Motor neuron (in vitro differentiated cells): ENCODE measurements at regions of chr10 and their contacts with region 1.

Region 1: DNA sequence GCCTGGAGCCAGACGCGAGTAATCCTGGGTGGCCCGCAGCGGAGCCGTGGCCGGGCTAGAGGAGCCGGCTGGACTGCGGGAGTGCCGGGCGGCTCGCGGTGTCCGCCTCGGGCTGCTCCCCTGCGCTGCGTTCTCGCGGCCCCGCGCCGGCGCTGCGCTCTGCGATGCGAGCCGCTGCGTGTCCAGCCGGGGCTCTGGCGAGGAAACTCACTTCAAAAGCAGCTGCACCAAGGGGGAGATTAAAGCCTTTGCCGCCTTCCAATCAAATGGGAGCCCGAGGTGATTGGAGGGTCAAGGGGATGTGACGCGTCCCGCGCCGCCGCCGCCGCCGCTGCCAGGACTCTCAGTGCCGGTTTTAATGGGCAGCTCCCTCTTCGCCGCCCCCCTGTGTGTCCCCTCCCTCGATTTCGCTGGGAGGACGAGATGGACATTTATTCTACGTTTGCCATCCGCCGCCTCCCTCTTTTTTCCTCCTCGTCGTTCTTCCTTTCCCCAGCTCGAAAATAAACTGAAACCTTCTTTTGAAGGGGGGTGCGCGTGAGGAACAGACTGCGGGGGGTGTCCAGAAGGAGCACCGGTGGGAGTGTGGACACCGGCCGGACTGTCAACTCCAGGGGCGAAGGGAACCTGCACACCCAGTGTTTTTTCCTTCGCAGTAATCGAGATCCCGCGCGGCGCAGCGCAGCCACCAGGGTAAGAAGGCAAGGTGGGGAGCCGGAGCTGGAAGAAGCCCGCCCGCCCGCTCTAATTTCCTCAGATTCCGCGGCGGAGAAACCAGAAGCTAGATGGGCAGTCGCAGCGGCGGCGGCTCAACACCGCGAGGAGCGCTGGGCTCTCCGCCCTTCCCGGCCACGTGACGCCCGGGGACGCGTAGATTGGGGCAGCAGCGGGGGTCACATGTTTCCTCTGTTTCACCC is at the start of gene ZNF503:
- ATAC-seq: peak; percentile 52 to 74 (median 58)
- H3K4me3 ChIP-seq: peak within 1 kb of the TSS; percentile 47 to 94 (median 56)
- H3K27ac ChIP-seq: peak within 1 kb of the TSS; percentile 92
- H3K4me1 ChIP-seq: peaks cover 0 to 9% of the 10 kb centered on the region in 2 donors
- total RNA-seq, gene ZNF503: 1.3 to 30.3 (median 19.0) TPM

Region 2: DNA sequence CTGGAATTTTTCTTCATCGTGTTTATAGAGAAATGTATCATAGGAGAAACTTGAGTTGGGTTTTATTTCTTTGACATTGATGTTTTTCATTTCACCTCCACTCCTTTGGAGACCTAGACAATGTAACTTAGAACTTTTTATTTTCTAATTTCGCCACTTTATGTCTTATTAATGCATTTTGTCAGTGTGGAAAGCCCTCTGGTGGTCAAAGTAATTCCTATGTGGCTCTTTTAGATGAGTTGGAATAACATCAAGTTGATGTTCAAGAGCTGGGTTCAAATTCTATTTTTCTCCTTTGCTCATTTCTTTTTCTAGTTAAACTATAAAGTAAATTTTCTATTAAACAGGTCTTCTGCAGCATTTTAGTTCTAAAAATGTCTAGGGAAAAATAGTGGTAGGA is 508.2 kb after region 1 on chr10:
- in situ Hi-C with region 1: loop called in 3 of 9 experiments (anchors 25 kb)
- ATAC-seq: no peak
- H3K4me3 ChIP-seq: no peak overlapping the region
- H3K27ac ChIP-seq: no peak overlapping the region
- H3K4me1 ChIP-seq: peaks cover 17 to 28% of the 10 kb centered on the region in 2 donors

Region 3: DNA sequence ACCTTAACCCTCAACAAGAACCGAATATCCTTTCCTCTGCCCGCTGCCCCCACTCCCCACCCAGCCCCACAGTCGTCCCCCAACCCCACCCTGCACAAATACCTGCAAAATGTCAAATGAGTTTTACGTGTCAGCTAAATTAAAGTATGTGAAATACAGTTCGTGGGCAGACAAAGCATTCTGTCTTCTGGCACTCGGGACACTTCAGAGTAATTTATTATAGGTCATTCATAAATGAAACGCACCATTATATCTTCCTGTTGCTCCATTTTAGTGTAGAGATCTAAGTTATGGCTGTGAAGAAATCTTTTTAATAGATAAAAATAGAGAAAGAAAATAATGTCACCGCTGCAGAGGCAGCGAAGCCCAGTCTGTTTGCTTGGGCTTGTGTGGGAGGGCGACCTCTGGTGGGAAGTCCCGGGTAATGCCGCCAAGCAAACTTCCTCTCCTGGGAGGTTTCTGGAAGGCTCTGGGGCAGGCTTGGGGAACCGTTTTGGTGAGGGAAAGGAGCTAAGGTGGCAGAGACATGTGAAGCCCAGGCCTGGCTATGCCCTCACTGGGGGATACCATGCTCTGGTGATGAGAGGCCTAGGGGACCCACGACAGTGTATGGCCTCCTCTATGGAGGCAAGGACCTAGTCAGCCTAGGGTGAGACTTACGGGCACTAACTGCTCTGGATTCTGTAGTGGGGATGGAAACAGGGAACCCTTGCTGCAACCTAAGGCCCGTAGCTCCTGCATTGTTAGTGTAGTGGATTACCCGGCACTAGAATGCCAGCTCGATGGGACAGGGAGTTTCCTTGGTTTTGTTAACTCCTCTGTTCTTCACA is 634.5 kb after region 1 on chr10:
- in situ Hi-C with region 1: loop called in 2 of 9 experiments (anchors 25 kb)
- ATAC-seq: peak; percentile 46 to 93 (median 62)
- H3K4me3 ChIP-seq: peak overlapping the region in 3 of 5 donors; percentile 0 to 9 (median 9)
- H3K27ac ChIP-seq: peak overlapping the region; percentile 56 to 65
- H3K4me1 ChIP-seq: peaks cover 43% of the 10 kb centered on the region in 2 donors

Region 4: GRCh38 chr10:76303682-76304316 is 902.0 kb after region 1 on chr10:
- in situ Hi-C with region 1: loop called in 3 of 9 experiments (anchors 10 to 25 kb)
- ATAC-seq: peak; percentile 93 to 99 (median 98)
- H3K4me3 ChIP-seq: no peak overlapping the region
- H3K27ac ChIP-seq: no peak overlapping the region
- H3K4me1 ChIP-seq: peaks cover 23 to 33% of the 10 kb centered on the region in 2 donors

Region 5: DNA sequence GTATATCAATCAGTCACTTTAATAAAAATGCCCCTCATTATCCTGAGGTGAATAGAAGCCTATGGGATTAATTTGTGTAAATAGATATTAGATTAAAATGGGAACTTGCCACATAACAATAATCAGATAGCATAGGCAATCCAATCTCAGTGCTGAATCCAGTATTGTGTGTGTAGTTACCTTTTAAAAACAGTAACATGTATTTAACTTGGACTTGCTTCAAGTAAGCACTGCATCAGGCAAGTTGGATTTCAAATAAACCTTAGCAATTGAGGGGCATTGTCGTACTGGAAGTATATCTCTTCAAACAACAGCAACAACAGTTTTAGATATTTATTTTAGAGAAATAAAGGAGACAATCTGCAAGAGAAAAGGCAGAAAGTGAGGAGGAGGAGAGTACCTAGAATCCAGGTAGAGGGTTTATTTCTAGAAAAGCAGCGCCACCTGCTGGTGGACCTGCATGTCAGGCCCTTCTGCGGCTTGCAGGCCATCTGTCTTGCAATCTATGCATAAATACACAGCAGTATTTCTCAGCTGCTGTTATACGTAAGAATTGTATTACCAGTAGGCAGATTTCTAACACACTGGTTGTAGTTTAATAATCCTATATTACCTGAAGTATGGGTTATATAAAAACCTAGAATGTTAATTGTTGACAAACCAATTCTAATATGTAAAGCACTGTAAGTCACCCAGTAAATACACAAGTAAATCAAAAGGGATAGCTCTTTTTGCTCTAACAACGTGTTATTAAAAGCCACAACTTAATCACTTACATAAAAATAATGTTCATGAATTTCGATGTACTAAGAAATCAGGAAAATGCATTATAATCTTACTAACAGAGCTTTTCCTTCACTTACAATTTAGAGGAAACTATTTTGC is 1583.0 kb after region 1 on chr10:
- in situ Hi-C with region 1: loop called in 1 of 9 experiments (anchors 25 kb)
- ATAC-seq: peak; percentile 82 to 97 (median 90)
- H3K4me3 ChIP-seq: no peak overlapping the region
- H3K27ac ChIP-seq: no peak overlapping the region
- H3K4me1 ChIP-seq: peaks cover 2 to 7% of the 10 kb centered on the region in 2 donors